Activated naive CD4-positive, alpha-beta T cell treated with anti-CD3 and anti-CD28 coated beads for 36 hours (primary cell): ENCODE measurements at regions of chr5 and their contacts with region 1.

Region 1: GRCh38 chr5:154236536-154237375 is 46.2 kb downstream of the GALNT10 start:
- DNase-seq: peak; percentile 60
- H3K4me3 Mint-ChIP-seq: no peak overlapping the region
- H3K27ac Mint-ChIP-seq: no peak overlapping the region
- H3K4me1 Mint-ChIP-seq: peaks cover 38% of the 10 kb centered on the region
- H3K27me3 Mint-ChIP-seq: no peaks in the 10 kb centered on the region

Region 2: DNA sequence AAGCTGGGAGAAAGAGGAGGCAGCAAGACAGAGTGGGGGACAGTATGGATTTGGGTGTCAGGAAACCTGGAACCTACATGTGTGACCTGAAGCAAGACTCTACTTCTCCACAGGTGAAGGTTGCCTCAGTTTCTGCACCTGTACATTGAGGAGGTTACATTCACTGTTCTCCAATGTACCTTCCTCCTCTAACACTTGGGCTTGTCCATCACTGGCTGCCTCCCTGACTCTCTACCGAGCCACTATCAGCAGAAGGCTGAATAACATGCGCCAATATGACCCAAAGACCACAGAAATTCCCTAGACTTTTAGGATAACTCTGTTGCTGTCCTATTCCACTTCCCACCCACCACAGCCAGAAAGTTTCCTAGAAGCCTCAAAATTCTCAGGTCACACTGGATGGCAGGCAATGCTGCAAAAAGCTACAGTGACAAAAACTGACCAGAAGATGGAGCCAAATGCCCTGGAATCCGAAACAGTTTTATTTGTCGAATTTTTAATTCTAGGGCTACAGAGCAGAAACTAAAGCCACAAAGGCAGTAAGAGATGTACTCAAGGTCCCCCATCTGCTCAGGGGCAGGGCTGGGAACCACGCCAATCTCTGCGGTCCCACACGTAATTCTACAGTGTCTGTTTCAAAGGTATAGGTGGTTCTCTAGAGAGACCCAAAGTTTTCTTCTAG is 262.5 kb before region 1 on chr5:
- CTCF ChIA-PET with region 1: no interaction called
- intact Hi-C with region 1: loop called (anchors 1 kb)
- DNase-seq: peak; percentile 58
- H3K4me3 Mint-ChIP-seq: no peak overlapping the region
- H3K27ac Mint-ChIP-seq: no peak overlapping the region
- H3K4me1 Mint-ChIP-seq: no peaks in the 10 kb centered on the region
- H3K27me3 Mint-ChIP-seq: peaks cover 3% of the 10 kb centered on the region

Region 3: DNA sequence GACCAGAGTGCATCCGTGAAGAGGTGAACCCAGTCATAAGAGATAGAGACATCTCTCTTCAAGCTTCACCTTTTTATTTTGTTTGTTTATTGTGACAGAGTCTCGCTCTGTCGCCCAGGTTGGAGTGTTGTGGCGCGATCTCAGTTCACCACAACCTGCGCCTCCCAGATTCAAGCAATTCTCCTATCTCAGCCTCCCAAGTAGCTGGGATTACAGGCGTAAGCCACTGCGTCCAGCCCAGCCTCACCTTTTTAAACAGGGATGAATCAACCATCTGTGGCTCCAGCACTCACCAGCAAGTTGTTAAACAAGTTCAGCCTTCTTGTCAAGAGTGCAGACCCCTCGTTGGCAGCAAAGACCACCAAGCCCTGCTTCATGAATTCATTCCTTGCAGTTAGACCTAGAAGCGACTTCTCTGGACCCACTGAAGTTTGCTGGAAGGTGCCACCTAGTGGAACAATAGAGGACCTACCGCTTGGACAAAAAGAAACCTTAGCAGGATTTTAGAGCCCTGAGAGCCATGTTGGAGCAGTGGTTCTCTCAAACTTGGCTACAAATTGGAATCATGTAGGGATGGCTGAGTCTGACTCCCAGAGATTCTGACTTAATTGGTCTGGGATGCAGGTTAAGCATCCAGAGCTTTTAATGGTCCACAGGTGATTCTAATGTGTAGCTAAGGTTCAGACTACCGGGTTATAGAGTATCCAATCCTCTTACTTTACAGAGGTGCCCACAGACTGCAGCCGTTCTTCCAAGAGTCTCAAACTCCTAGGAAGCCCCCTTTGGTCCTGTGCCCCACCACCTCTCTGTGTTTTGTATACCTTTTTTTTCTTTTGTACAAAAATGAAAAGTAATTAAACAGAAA is 56.7 kb before region 1 on chr5:
- CTCF ChIA-PET with region 1: interaction called, 5 read pairs
- intact Hi-C with region 1: loop called (anchors 1 kb)
- DNase-seq: peak; percentile 52
- H3K4me3 Mint-ChIP-seq: no peak overlapping the region
- H3K27ac Mint-ChIP-seq: no peak overlapping the region
- H3K4me1 Mint-ChIP-seq: no peaks in the 10 kb centered on the region
- H3K27me3 Mint-ChIP-seq: peaks cover 4% of the 10 kb centered on the region

Region 4: DNA sequence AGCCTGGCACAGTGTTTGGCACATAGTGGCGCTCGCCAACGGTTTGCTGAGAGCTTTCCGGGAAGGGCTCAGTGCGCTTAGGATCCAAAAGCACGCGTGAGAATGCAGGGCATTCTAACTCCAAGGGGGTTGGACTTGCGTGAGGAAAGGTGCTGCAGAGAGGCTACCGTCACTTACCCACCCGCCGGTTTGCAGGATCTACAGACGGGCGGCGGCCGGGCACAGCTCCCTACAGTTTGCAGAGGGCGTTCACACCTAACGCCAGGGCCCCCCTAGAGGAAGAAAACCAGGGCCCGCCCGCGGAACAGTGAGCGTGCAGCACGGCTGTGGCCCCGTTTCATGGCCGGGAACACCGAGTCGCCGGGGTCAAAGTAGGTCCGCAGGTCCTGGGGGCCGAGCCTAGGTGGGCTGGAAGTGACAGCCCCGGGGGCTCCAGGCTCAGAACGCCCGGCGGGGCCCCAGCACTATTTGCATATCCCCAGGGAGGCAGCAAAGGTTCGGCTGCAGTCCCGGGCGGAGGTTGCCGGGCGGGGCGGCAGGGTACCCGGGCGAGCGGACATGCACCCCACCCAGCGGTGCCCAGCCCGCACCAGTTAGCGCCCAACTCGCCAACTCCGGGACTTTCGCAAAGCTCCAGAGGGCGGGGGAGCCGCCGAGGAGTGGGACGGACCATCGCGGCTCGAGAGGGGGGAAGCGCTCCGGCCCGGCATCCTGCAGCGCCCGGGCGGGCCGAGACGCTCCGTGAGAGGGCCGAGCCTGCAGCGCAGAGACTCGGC is 46.7 kb before region 1 on chr5:
- CTCF ChIA-PET with region 1: interaction called, 13 read pairs
- intact Hi-C with region 1: loop called (anchors 2 kb)
- DNase-seq: peak; percentile 82
- H3K4me3 Mint-ChIP-seq: peak overlapping the region; percentile 81
- H3K27ac Mint-ChIP-seq: no peak overlapping the region
- H3K4me1 Mint-ChIP-seq: peaks cover 32% of the 10 kb centered on the region
- H3K27me3 Mint-ChIP-seq: peaks cover 7% of the 10 kb centered on the region

Region 5: DNA sequence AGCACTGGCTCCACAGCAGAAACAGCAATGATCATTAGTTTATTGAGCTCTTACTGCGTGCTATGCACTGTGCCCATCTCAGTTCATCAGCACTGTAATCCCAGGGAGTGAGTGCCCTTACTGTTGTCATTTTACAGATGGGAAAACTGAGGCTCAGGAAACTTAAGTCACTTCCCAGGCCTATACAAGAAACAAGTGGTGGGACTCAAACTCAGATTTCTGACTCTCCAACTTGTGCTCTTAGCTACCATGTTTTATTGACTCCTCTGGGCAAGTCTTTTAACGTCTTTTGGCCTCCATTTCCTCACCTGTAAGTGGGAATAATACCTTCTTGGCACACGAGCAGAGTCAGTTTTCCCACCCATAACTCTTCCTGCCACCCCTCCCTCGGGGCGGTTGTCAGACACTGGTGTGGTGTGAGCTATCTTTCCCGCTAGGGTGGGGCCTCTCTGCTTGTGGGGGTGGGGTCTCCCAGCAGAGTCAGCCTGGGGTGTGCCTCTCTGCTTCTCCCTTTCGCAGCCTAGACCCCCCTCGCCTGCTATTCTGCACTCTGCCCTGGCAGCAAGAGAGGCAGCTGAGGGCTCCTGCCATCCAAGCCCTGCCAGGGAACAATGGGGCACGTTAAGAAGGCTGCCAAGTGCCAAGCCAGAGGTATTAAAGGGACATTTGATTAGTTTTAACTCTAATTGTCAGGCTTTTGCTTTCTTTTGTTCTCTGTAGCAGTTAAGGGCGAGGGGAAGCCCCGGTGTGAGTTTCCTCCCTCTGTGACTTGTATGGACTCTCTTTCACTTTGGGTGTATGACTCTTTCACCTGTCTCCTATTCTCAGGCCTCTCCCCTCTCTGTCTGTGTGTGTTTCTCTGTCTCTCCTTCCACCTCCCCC is 34.1 kb before region 1 on chr5:
- CTCF ChIA-PET with region 1: interaction called, 5 read pairs
- intact Hi-C with region 1: loop called (anchors 2 kb)
- DNase-seq: peak; percentile 86
- H3K4me3 Mint-ChIP-seq: peak overlapping the region; percentile 69
- H3K27ac Mint-ChIP-seq: peak overlapping the region; percentile 92
- H3K4me1 Mint-ChIP-seq: peaks cover 58% of the 10 kb centered on the region
- H3K27me3 Mint-ChIP-seq: no peaks in the 10 kb centered on the region